Naive thymus-derived CD4-positive, alpha-beta T cell (primary cell): ENCODE measurements at regions of chr12 and their contacts with region 1.

Region 1: GRCh38 chr12:68451261-68452077 is 119.3 kb upstream of the MDM1 start:
- DNase-seq: peak in 7 of 9 donors; percentile 8 to 59 (median 29)
- ATAC-seq: peak; percentile 68
- H3K4me3 ChIP-seq: peak overlapping the region; percentile 28
- H3K4me3 Mint-ChIP-seq: peak overlapping the region; percentile 61 to 85 (median 72)
- H3K27ac ChIP-seq: peak overlapping the region; percentile 48
- H3K27ac Mint-ChIP-seq: peak overlapping the region; percentile 49 to 97 (median 76)
- H3K4me1 ChIP-seq: peaks cover 64 to 68% of the 10 kb centered on the region in 2 donors
- H3K4me1 Mint-ChIP-seq: peaks cover 72 to 100% (median 95%) of the 10 kb centered on the region in 7 donors
- H3K27me3 ChIP-seq: no peaks in the 10 kb centered on the region
- H3K27me3 Mint-ChIP-seq: no peaks in the 10 kb centered on the region

Region 2: GRCh38 chr12:68231229-68231628 is 220.2 kb before region 1 on chr12:
- CTCF ChIA-PET with region 1: no interaction called
- POLR2A ChIA-PET with region 1: no interaction called
- intact Hi-C with region 1: loop called in 1 of 2 experiments (anchors 5 kb)
- DNase-seq: no peak
- ATAC-seq: no peak
- H3K4me3 ChIP-seq: no peak overlapping the region
- H3K4me3 Mint-ChIP-seq: no peak overlapping the region
- H3K27ac ChIP-seq: no peak overlapping the region
- H3K27ac Mint-ChIP-seq: no peak overlapping the region
- H3K4me1 ChIP-seq: peaks cover 3% of the 10 kb centered on the region in 2 donors
- H3K4me1 Mint-ChIP-seq: peaks cover 9 to 47% (median 22%) of the 10 kb centered on the region in 7 donors
- H3K27me3 ChIP-seq: no peaks in the 10 kb centered on the region
- H3K27me3 Mint-ChIP-seq: no peaks in the 10 kb centered on the region

Region 3: GRCh38 chr12:68374307-68374982 is 77.0 kb before region 1 on chr12:
- CTCF ChIA-PET with region 1: no interaction called
- POLR2A ChIA-PET with region 1: interaction called, 3 read pairs
- intact Hi-C with region 1: loop called in 1 of 2 experiments (anchors 1 kb)
- DNase-seq: peak in 3 of 9 donors; percentile 17 to 39 (median 38)
- ATAC-seq: peak; percentile 70
- H3K4me3 ChIP-seq: no peak overlapping the region
- H3K4me3 Mint-ChIP-seq: peak overlapping the region in 4 of 10 donors; percentile 16 to 48 (median 22)
- H3K27ac ChIP-seq: no peak overlapping the region
- H3K27ac Mint-ChIP-seq: peak overlapping the region in 4 of 9 donors; percentile 10 to 78 (median 28)
- H3K4me1 ChIP-seq: peaks cover 18 to 19% of the 10 kb centered on the region in 2 donors
- H3K4me1 Mint-ChIP-seq: peaks cover 29 to 57% (median 43%) of the 10 kb centered on the region in 7 donors
- H3K27me3 ChIP-seq: no peaks in the 10 kb centered on the region
- H3K27me3 Mint-ChIP-seq: no peaks in the 10 kb centered on the region

Region 4: DNA sequence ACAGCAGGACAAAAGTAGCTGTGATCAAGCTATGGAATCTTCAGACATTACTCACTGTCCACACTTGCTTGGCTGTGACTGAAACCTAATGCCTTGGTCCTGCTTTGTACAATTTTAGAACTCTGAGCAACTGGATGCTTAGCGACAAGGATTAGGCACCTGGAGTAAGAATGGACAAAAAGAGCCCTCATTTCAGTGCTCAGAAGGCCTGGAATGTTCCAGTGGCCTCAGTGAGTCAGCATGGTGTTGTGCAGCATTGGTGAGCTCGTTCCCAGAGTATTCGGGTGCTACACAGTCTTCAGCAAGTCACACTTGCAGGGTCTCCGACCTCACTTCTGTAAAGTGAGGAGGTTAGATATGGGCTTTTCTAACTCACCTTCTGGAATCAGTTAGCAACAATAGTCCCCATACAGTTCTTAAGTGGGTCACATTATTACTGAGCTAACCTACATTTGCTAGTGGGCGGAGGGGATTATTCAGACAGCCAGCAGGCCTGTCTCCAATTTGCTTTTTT is 11.3 kb before region 1 on chr12:
- CTCF ChIA-PET with region 1: no interaction called
- POLR2A ChIA-PET with region 1: no interaction called
- intact Hi-C with region 1: no loop called
- DNase-seq: no peak
- ATAC-seq: no peak
- H3K4me3 ChIP-seq: no peak overlapping the region
- H3K4me3 Mint-ChIP-seq: no peak overlapping the region
- H3K27ac ChIP-seq: no peak overlapping the region
- H3K27ac Mint-ChIP-seq: no peak overlapping the region
- H3K4me1 ChIP-seq: peaks cover 4 to 8% of the 10 kb centered on the region in 2 donors
- H3K4me1 Mint-ChIP-seq: peaks cover 22 to 39% (median 27%) of the 10 kb centered on the region in 7 donors
- H3K27me3 ChIP-seq: no peaks in the 10 kb centered on the region
- H3K27me3 Mint-ChIP-seq: no peaks in the 10 kb centered on the region

Region 5: GRCh38 chr12:68462803-68463202 is 11.3 kb after region 1 on chr12:
- CTCF ChIA-PET with region 1: interaction called, 3 read pairs
- POLR2A ChIA-PET with region 1: interaction called, 23 read pairs
- intact Hi-C with region 1: loop called in 1 of 2 experiments (anchors 1 kb)
- DNase-seq: peak in 2 of 9 donors; percentile 9 to 31
- ATAC-seq: no peak
- H3K4me3 ChIP-seq: peak overlapping the region; percentile 60
- H3K4me3 Mint-ChIP-seq: peak overlapping the region; percentile 76 to 89 (median 82)
- H3K27ac ChIP-seq: no peak overlapping the region
- H3K27ac Mint-ChIP-seq: peak overlapping the region; percentile 84 to 96 (median 88)
- H3K4me1 ChIP-seq: peaks cover 0 to 7% of the 10 kb centered on the region in 2 donors
- H3K4me1 Mint-ChIP-seq: peaks cover 8 to 30% (median 18%) of the 10 kb centered on the region in 7 donors
- H3K27me3 ChIP-seq: no peaks in the 10 kb centered on the region
- H3K27me3 Mint-ChIP-seq: no peaks in the 10 kb centered on the region

Region 6: DNA sequence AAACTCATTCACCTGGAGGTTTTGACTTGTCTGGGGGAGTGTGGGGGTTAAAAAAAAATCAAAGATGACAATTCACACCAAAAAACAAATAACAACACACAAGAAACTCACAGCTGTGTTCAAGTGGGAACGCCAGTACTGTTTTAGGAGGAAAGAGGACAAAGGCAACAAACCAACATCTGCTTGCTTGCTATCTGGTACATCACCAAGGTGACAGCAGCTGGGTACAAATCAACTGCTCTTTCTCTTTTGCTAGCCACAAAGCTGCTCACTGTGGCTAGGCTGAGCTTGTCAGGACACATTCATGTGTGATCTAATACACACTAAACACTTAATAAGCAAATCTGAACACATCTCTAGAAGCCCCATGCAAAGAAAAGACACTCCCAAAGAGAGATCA is 31.2 kb after region 1 on chr12:
- CTCF ChIA-PET with region 1: no interaction called
- POLR2A ChIA-PET with region 1: no interaction called
- intact Hi-C with region 1: loop called in 1 of 2 experiments (anchors 1 kb)
- DNase-seq: no peak
- ATAC-seq: peak; percentile 67
- H3K4me3 ChIP-seq: no peak overlapping the region
- H3K4me3 Mint-ChIP-seq: peak overlapping the region in 1 of 10 donors; percentile 74
- H3K27ac ChIP-seq: no peak overlapping the region
- H3K27ac Mint-ChIP-seq: peak overlapping the region in 5 of 9 donors; percentile 8 to 86 (median 65)
- H3K4me1 ChIP-seq: peaks cover 0 to 27% of the 10 kb centered on the region in 2 donors
- H3K4me1 Mint-ChIP-seq: peaks cover 10 to 46% (median 27%) of the 10 kb centered on the region in 7 donors
- H3K27me3 ChIP-seq: no peaks in the 10 kb centered on the region
- H3K27me3 Mint-ChIP-seq: no peaks in the 10 kb centered on the region

Region 7: DNA sequence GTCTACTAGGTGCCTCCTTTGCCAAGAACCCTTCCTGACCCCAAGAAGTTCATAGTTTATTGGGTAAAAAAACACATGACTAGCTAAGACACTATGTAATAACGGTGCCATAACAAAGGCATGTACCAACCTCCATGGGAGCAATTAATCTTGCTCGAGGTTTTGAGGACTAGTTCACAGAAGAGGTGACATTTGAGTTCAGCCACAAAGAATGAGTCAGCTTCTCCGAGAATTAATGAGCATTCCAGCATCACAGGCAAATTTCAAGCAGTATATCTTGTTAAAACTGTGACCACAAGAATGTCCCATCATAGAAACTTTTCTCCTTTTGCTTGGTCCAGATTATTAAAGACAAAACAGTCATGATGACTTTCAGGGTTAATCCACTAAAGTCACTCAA is 46.2 kb after region 1 on chr12:
- CTCF ChIA-PET with region 1: no interaction called
- POLR2A ChIA-PET with region 1: no interaction called
- intact Hi-C with region 1: loop called in 1 of 2 experiments (anchors 5 kb)
- DNase-seq: no peak
- ATAC-seq: peak; percentile 26
- H3K4me3 ChIP-seq: no peak overlapping the region
- H3K4me3 Mint-ChIP-seq: peak overlapping the region in 1 of 10 donors; percentile 50
- H3K27ac ChIP-seq: no peak overlapping the region
- H3K27ac Mint-ChIP-seq: peak overlapping the region in 1 of 9 donors; percentile 73
- H3K4me1 ChIP-seq: peaks cover 0 to 7% of the 10 kb centered on the region in 2 donors
- H3K4me1 Mint-ChIP-seq: peaks cover 0 to 29% (median 18%) of the 10 kb centered on the region in 7 donors
- H3K27me3 ChIP-seq: no peaks in the 10 kb centered on the region
- H3K27me3 Mint-ChIP-seq: no peaks in the 10 kb centered on the region